Ovary (tissue), 10 donors: ENCODE measurements at regions of chr17 and their contacts with region 1.

Region 1: DNA sequence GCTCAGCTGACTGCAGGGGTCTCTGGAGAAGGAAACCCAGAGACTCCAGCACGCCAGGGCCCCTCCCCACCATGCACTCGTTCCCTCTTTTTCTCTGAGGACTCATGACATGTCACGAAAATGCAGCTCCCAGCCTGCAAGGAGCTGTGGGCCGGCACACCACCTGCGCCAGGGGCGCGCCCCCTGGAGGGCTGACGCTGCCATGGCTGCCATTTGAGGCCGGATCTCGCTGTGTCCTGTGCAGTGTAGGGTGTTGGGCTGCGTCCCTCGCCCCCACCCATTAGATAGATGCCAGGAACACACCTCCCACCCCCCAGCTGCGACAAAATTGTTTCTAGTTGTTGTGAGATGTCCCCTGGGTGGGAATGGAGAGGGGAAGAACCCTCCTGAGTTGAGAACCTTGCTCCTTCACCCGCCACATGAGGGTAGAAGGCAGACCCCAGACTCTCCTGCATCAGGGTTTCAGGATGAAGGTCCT is 8.2 kb downstream of the SYNGR2 start:
- DNase-seq: peak; percentile 58 to 83 (median 75)
- H3K4me3 ChIP-seq: no peak overlapping the region
- H3K27ac ChIP-seq: no peak overlapping the region
- H3K4me1 ChIP-seq: peaks cover 28% of the 10 kb centered on the region
- H3K27me3 ChIP-seq: no peaks in the 10 kb centered on the region
- CTCF ChIP-seq: peak; percentile 67 to 77 (median 68)
- EP300 ChIP-seq: no peak
- POLR2A ChIP-seq: no peak

Region 2: DNA sequence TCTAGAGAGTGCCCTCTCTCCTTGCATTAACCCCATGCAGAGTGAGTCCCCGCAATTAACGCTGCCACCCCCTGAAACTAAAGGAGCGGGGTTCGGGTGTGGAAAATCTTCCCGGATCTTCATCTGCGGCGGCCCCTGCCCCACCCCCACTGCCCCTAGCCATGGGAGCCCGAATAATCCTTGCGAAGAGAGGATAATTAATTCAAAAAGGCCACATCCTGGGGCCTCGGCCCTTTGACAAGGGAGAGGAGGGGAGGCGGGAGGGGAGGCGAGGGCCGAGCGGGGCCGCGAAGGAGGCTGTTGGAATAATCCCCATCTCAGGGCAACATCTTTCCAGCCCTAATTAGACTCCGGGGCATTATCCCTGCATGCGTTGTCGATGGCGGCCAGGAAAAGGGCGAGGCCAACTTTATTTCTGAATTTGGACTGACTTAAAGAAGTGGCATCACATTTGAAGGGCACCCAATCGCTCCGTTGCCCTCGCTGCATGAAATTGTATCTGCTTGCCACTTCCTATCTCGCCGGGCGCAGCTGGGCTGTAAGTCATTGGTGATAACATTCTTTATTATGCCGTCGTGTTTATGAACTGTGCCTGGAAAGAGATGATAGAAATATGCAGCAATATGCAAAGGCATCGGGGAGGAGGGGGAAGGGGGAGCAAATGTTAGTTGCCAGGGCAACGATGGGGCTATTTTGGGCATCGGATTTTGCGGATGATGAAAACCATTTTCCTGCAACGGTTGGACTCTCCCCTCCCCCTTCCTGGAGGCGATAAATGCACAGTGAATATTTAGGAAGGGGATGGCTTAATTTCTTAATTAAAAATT is 605.2 kb before region 1 on chr17:
- intact Hi-C with region 1: no loop called
- DNase-seq: no peak
- H3K4me3 ChIP-seq: no peak overlapping the region
- H3K27ac ChIP-seq: no peak overlapping the region
- H3K4me1 ChIP-seq: peaks cover 3% of the 10 kb centered on the region
- H3K27me3 ChIP-seq: no peaks in the 10 kb centered on the region
- CTCF ChIP-seq: no peak
- EP300 ChIP-seq: no peak
- POLR2A ChIP-seq: no peak

Region 3: GRCh38 chr17:78112518-78113226 is 63.9 kb before region 1 on chr17:
- intact Hi-C with region 1: loop called (anchors 1 to 5 kb)
- DNase-seq: peak; percentile 58 to 87 (median 79)
- H3K4me3 ChIP-seq: no peak overlapping the region
- H3K27ac ChIP-seq: no peak overlapping the region
- H3K4me1 ChIP-seq: no peaks in the 10 kb centered on the region
- H3K27me3 ChIP-seq: no peaks in the 10 kb centered on the region
- CTCF ChIP-seq: peak; percentile 96 to 99 (median 97)
- EP300 ChIP-seq: no peak
- POLR2A ChIP-seq: no peak

Region 4: DNA sequence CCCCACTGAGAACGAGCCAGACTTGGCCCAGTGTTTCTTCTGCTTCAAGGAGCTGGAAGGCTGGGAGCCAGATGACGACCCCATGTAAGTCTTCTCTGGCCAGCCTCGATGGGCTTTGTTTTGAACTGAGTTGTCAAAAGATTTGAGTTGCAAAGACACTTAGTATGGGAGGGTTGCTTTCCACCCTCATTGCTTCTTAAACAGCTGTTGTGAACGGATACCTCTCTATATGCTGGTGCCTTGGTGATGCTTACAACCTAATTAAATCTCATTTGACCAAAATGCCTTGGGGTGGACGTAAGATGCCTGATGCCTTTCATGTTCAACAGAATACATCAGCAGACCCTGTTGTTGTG is 38.1 kb after region 1 on chr17:
- intact Hi-C with region 1: loop called in 1 of 4 experiments (anchors 1 kb)
- DNase-seq: no peak
- H3K4me3 ChIP-seq: no peak overlapping the region
- H3K27ac ChIP-seq: no peak overlapping the region
- H3K4me1 ChIP-seq: peaks cover 1% of the 10 kb centered on the region
- H3K27me3 ChIP-seq: no peaks in the 10 kb centered on the region
- CTCF ChIP-seq: no peak
- EP300 ChIP-seq: no peak
- POLR2A ChIP-seq: no peak